ENCODE measurements at regions of chr10 and their contacts with region 1.

Region 1: GRCh38 chr10:103111031-103111917 is 81.8 kb downstream of the NT5C2 start:
- DNase-seq: no peak
- ATAC-seq: peak; percentile 94 to 95
- H3K4me3 ChIP-seq: peak overlapping the region in 3 of 4 donors; percentile 8 to 48 (median 8)
- H3K27ac ChIP-seq: peak overlapping the region; percentile 79 to 92 (median 84)
- H3K4me1 ChIP-seq: peaks cover 86 to 87% of the 10 kb centered on the region in 2 donors
- H3K27me3 ChIP-seq: no peaks in the 10 kb centered on the region
- CTCF ChIP-seq: peak in 2 of 5 experiments; percentile 13 to 23
- POLR2A ChIP-seq: peak in 1 of 2 donors; percentile 5

Region 2: GRCh38 chr10:103145860-103146466 is 34.7 kb after region 1 on chr10:
- in situ Hi-C with region 1: no loop called
- intact Hi-C with region 1: loop called (anchors 5 kb)
- DNase-seq: peak; percentile 84 to 86
- ATAC-seq: peak; percentile 76 to 78
- H3K4me3 ChIP-seq: peak overlapping the region; percentile 35 to 48 (median 44)
- H3K27ac ChIP-seq: peak overlapping the region; percentile 74 to 93 (median 88)
- H3K4me1 ChIP-seq: peaks cover 47 to 85% of the 10 kb centered on the region in 2 donors
- H3K27me3 ChIP-seq: no peaks in the 10 kb centered on the region
- CTCF ChIP-seq: no peak
- POLR2A ChIP-seq: peak; percentile 8 to 69

Region 3: GRCh38 chr10:103433858-103434257 is 322.6 kb after region 1 on chr10:
- in situ Hi-C with region 1: no loop called
- intact Hi-C with region 1: no loop called
- DNase-seq: peak in 1 of 2 donors; percentile 50
- ATAC-seq: peak in 1 of 2 donors; percentile 30
- H3K4me3 ChIP-seq: no peak overlapping the region
- H3K27ac ChIP-seq: peak overlapping the region in 1 of 4 donors; percentile 43
- H3K4me1 ChIP-seq: no peaks in the 10 kb centered on the region
- H3K27me3 ChIP-seq: no peaks in the 10 kb centered on the region
- CTCF ChIP-seq: no peak
- POLR2A ChIP-seq: no peak